Activated B cell treated with CpG ODN at 0.5 μM for 24 hours (primary cell): ENCODE measurements at regions of chr5 and their contacts with region 1.

Region 1: GRCh38 chr5:157596487-157596886 is 20.9 kb upstream of the ADAM19 start:
- DNase-seq: no peak
- ATAC-seq: peak; percentile 72
- H3K4me3 Mint-ChIP-seq: peak overlapping the region; percentile 42
- H3K27ac Mint-ChIP-seq: peak overlapping the region; percentile 93
- H3K4me1 Mint-ChIP-seq: peaks cover 97% of the 10 kb centered on the region
- H3K27me3 Mint-ChIP-seq: no peaks in the 10 kb centered on the region
- CTCF ChIP-seq: no peak

Region 2: GRCh38 chr5:157271740-157272271 is 324.7 kb before region 1 on chr5:
- CTCF ChIA-PET with region 1: no interaction called
- POLR2A ChIA-PET with region 1: interaction called, 12 read pairs
- intact Hi-C with region 1: loop called (anchors 5 kb)
- DNase-seq: peak; percentile 74
- ATAC-seq: peak; percentile 86
- H3K4me3 Mint-ChIP-seq: peak overlapping the region; percentile 73
- H3K27ac Mint-ChIP-seq: peak overlapping the region; percentile 99
- H3K4me1 Mint-ChIP-seq: peaks cover 93% of the 10 kb centered on the region
- H3K27me3 Mint-ChIP-seq: no peaks in the 10 kb centered on the region
- CTCF ChIP-seq: no peak

Region 3: DNA sequence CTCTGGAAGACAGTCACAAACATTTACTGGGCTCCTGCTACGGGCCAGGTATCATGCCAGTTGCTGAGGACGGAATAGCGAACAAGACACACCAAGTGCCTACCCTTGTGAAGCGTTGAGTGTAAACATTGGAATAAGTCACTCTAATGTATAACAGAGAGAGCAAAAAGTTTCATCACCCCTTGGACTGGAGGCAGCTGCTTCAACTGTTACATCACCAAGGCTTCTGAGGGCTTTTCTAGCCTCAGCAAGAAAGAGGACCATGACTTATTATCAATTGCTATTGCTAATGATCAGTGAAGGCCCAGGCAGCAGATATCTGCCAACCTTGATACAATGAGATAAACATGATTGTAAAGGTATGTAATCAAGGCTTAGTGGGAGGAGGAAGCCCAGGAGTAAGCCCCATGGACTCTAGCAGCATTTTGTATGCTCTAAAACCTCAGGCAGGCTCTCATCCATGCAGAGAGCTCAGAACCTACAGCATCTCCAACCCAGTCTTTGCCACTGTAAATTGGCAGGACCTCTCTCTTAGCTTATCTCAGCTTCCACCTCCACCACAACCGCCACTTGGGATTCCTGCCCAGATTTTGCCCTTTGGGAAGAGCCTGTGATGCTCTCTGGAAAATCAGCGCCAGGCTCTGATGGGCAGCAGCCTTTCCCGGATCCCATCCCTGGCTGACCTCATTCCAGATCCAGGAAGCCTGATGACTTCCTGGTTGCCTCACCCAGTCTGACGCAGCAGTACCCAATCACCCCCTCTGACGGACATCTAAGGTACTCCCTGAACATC is 75.4 kb before region 1 on chr5:
- CTCF ChIA-PET with region 1: no interaction called
- POLR2A ChIA-PET with region 1: interaction called, 15 read pairs
- intact Hi-C with region 1: no loop called
- DNase-seq: no peak
- ATAC-seq: no peak
- H3K4me3 Mint-ChIP-seq: peak overlapping the region; percentile 47
- H3K27ac Mint-ChIP-seq: peak overlapping the region; percentile 93
- H3K4me1 Mint-ChIP-seq: peaks cover 89% of the 10 kb centered on the region
- H3K27me3 Mint-ChIP-seq: no peaks in the 10 kb centered on the region
- CTCF ChIP-seq: no peak

Region 4: GRCh38 chr5:157575381-157576020 is 21.0 kb before region 1 on chr5 and contains the start of gene ADAM19:
- CTCF ChIA-PET with region 1: interaction called, 14 read pairs
- POLR2A ChIA-PET with region 1: interaction called, 206 read pairs
- intact Hi-C with region 1: loop called (anchors 1 kb)
- DNase-seq: peak; percentile 70
- ATAC-seq: peak; percentile 56
- H3K4me3 Mint-ChIP-seq: peak within 1 kb of the TSS; percentile 99
- H3K27ac Mint-ChIP-seq: peak within 1 kb of the TSS; percentile 95
- H3K4me1 Mint-ChIP-seq: peaks cover 76% of the 10 kb centered on the region
- H3K27me3 Mint-ChIP-seq: no peaks in the 10 kb centered on the region
- CTCF ChIP-seq: no peak
- total RNA-seq, gene ADAM19: 115 and 136 TPM in 2 replicates

Region 5: GRCh38 chr5:157670662-157671591 is 74.4 kb after region 1 on chr5 and contains the start of gene C5orf52:
- CTCF ChIA-PET with region 1: interaction called, 6 read pairs
- POLR2A ChIA-PET with region 1: interaction called, 12 read pairs
- intact Hi-C with region 1: no loop called
- DNase-seq: no peak
- ATAC-seq: peak; percentile 55
- H3K4me3 Mint-ChIP-seq: peak within 1 kb of the TSS; percentile 95
- H3K27ac Mint-ChIP-seq: peak within 1 kb of the TSS; percentile 65
- H3K4me1 Mint-ChIP-seq: peaks cover 28% of the 10 kb centered on the region
- H3K27me3 Mint-ChIP-seq: no peaks in the 10 kb centered on the region
- CTCF ChIP-seq: no peak
- total RNA-seq, gene C5orf52: not detected in 2 replicates

Region 6: DNA sequence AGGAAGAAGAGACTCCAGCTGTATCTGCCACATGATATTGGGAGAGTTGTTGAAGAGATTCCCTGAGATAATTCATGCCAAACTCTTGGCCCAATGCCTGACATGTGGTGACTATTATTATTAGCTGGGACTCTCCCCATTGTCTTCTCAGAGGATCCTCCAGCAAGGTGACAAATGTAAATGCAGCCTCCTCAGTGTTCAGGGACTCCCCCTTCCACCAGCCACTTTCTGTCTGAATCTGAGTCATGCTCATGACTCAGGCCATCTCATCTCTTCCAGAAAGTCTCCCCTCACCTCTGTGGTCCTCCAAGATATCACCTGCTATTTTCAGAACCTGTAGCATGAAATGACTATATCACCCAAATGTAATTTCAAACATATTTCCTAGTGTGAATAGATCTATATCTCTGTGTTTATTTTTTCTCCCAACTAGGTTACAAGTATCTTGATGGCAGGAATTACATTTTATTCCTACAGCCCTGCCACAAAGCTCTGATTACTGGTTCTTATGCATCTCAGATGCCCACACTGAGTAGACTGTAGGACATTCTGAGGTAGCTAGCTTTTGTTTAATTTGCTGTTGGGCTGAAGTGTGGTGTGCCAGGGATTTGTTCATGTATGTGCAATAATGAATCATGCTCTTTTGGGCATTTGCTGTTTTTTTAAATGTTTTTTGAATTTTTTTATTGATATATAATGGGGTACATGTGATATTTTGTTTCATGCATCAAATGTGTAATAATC is 1860.4 kb after region 1 on chr5:
- CTCF ChIA-PET with region 1: no interaction called
- POLR2A ChIA-PET with region 1: no interaction called
- intact Hi-C with region 1: loop called (anchors 2 kb)
- DNase-seq: no peak
- ATAC-seq: peak; percentile 66
- H3K4me3 Mint-ChIP-seq: peak overlapping the region; percentile 35
- H3K27ac Mint-ChIP-seq: peak overlapping the region; percentile 76
- H3K4me1 Mint-ChIP-seq: peaks cover 72% of the 10 kb centered on the region
- H3K27me3 Mint-ChIP-seq: no peaks in the 10 kb centered on the region
- CTCF ChIP-seq: no peak